ENCODE measurements at regions of chr1 and their contacts with region 1.

Region 1: GRCh38 chr1:28088168-28088961 is at the start of gene EYA3:
- DNase-seq: peak; percentile 99
- ATAC-seq: peak; percentile 93
- H3K4me3 ChIP-seq: peak within 1 kb of the TSS; percentile 79 to 97 (median 82)
- H3K4me3 Mint-ChIP-seq: peak within 1 kb of the TSS; percentile 94
- H3K27ac ChIP-seq: peak within 1 kb of the TSS; percentile 83 to 91
- H3K27ac Mint-ChIP-seq: peak within 1 kb of the TSS; percentile 96
- H3K4me1 ChIP-seq: peaks cover 11 to 24% of the 10 kb centered on the region in 2 donors
- H3K4me1 Mint-ChIP-seq: peaks cover 43% of the 10 kb centered on the region
- H3K27me3 ChIP-seq: no peaks in the 10 kb centered on the region
- H3K27me3 Mint-ChIP-seq: no peaks in the 10 kb centered on the region
- CTCF ChIP-seq: no peak
- total RNA-seq, gene EYA3: 31.3 and 31.7 TPM in 2 replicates

Region 2: DNA sequence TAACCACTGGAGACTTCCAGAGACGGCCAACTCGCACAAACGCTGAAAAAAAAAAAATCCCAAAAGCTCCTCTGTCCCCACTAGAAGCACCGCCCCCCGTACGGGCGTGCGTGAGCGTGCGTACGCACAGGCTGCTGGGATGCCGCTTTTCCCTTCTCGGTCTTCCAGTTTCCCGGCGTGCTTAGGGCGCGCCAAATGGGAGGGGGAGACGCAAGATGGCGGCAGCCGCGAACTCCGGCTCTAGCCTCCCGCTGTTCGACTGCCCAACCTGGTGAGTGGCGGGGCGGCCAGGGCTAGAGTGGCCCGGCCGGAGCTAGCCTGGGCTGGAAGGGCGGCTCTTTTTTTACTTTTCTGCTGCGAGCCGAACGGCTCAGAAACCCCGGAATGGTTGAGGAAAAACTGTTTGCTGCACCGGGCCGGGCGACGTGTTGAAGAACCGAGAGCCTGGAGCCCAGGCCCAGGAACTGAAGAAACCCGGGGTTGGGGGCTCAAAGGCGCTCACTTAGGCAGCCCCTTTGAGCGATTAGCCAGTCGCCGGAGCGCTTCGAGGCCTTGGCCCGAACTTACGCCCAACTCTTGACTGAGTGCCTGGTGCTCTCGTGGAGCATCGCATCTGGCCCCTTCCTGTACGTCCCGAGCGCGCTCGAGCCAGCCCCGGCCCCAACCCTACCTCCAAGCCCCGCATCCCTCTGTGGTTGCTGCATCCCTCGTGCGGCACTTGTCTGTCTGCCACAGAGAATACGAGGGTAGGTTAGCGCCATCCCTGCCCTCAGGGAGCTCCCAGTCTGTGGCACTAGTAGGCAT is 257.5 kb before region 1 on chr1 and contains the start of gene PPP1R8:
- CTCF ChIA-PET with region 1: no interaction called
- POLR2A ChIA-PET with region 1: no interaction called
- intact Hi-C with region 1: loop called (anchors 2 kb)
- DNase-seq: peak; percentile 92
- ATAC-seq: peak; percentile 99
- H3K4me3 ChIP-seq: peak within 1 kb of the TSS; percentile 74 to 98 (median 90)
- H3K4me3 Mint-ChIP-seq: peak within 1 kb of the TSS; percentile 94
- H3K27ac ChIP-seq: peak within 1 kb of the TSS; percentile 55 to 88
- H3K27ac Mint-ChIP-seq: peak within 1 kb of the TSS; percentile 93
- H3K4me1 ChIP-seq: peaks cover 12 to 17% of the 10 kb centered on the region in 2 donors
- H3K4me1 Mint-ChIP-seq: peaks cover 23% of the 10 kb centered on the region
- H3K27me3 ChIP-seq: no peaks in the 10 kb centered on the region
- H3K27me3 Mint-ChIP-seq: no peaks in the 10 kb centered on the region
- CTCF ChIP-seq: no peak
- total RNA-seq, gene PPP1R8: 45.1 and 45.4 TPM in 2 replicates

Region 3: DNA sequence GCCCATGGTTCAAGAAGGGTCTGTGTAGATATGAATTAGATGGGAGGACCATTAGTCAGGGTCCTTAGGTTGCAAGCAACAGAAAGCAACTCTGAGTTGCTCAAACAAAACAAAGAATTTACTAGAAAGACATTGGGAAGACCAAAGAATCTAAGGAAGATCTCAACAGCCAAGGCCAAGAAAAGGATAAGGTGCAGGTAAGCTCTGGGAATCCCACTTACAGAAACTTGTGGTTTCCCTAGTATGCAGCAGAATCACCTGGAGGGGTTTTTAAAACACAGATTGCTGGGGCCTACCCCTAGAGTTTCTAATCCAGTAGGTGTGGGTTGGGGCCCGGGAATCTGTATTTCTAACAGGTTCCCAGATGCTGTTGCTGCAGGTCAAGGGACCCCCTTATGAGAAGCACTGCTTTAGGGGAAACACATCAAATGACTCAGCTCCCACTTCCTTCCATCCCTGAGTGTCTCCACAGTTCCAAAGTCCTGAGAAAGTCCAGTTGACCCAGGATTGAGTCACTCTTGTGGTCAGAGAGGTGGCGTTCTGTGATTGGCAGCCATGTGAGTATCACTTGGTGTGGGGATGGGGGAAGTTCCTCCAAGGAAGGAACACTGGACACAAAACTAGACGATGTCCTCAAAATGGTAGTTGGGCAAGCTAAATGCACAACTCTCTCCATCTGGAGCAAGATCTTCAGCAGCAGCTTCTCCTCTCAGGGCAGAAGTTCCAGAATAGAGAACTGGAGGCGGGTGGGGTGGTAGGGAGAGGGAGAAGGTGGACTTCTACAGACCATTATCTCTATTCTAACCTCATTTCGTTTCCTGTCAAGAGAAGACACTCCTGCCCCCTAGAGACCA is 24.2 kb after region 1 on chr1:
- CTCF ChIA-PET with region 1: interaction called, 15 read pairs
- POLR2A ChIA-PET with region 1: interaction called, 4 read pairs
- intact Hi-C with region 1: no loop called
- DNase-seq: no peak
- ATAC-seq: no peak
- H3K4me3 ChIP-seq: no peak overlapping the region
- H3K4me3 Mint-ChIP-seq: no peak overlapping the region
- H3K27ac ChIP-seq: no peak overlapping the region
- H3K27ac Mint-ChIP-seq: no peak overlapping the region
- H3K4me1 ChIP-seq: peaks cover 15 to 18% of the 10 kb centered on the region in 2 donors
- H3K4me1 Mint-ChIP-seq: peaks cover 19% of the 10 kb centered on the region
- H3K27me3 ChIP-seq: no peaks in the 10 kb centered on the region
- H3K27me3 Mint-ChIP-seq: no peaks in the 10 kb centered on the region
- CTCF ChIP-seq: no peak

Region 4: DNA sequence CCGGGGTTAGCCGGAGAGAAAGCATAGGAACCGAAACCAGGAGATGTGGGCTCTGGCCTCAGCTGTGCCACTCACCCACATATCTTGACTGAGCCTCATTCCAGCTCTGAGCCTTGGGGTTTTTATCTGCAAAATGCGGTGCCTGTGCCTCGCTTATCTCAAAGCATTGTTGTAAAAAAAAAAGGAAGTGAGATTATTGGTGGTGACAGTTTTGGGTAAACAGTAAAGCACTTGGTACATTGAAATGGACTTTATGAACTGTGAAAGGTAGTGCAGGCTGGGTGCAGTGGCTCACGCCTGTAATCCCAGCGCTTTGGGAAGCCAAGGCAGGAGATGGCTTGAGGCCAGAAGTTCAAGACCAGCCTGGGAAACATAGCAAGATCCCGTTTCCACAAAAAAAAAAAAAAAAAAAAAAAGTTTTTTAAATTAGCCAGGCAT is 84.4 kb after region 1 on chr1:
- CTCF ChIA-PET with region 1: interaction called, 24 read pairs
- POLR2A ChIA-PET with region 1: interaction called, 5 read pairs
- intact Hi-C with region 1: loop called (anchors 1 kb)
- DNase-seq: peak; percentile 92
- ATAC-seq: peak; percentile 74
- H3K4me3 ChIP-seq: peak overlapping the region in 2 of 5 experiments; percentile 25 to 38
- H3K4me3 Mint-ChIP-seq: peak overlapping the region; percentile 60
- H3K27ac ChIP-seq: peak overlapping the region; percentile 59 to 66
- H3K27ac Mint-ChIP-seq: peak overlapping the region; percentile 88
- H3K4me1 ChIP-seq: peaks cover 85 to 94% of the 10 kb centered on the region in 2 donors
- H3K4me1 Mint-ChIP-seq: peaks cover 80% of the 10 kb centered on the region
- H3K27me3 ChIP-seq: no peaks in the 10 kb centered on the region
- H3K27me3 Mint-ChIP-seq: no peaks in the 10 kb centered on the region
- CTCF ChIP-seq: no peak

Region 5: GRCh38 chr1:28208818-28209441 is 120.6 kb after region 1 on chr1:
- CTCF ChIA-PET with region 1: interaction called, 357 read pairs
- POLR2A ChIA-PET with region 1: interaction called, 9 read pairs
- intact Hi-C with region 1: loop called (anchors 1 kb)
- DNase-seq: peak; percentile 80
- ATAC-seq: peak; percentile 86
- H3K4me3 ChIP-seq: no peak overlapping the region
- H3K4me3 Mint-ChIP-seq: no peak overlapping the region
- H3K27ac ChIP-seq: no peak overlapping the region
- H3K27ac Mint-ChIP-seq: no peak overlapping the region
- H3K4me1 ChIP-seq: no peaks in the 10 kb centered on the region
- H3K4me1 Mint-ChIP-seq: peaks cover 2% of the 10 kb centered on the region
- H3K27me3 ChIP-seq: no peaks in the 10 kb centered on the region
- H3K27me3 Mint-ChIP-seq: no peaks in the 10 kb centered on the region
- CTCF ChIP-seq: peak; percentile 91